ENCODE measurements at regions of chr12 and their contacts with region 1.

Region 1: GRCh38 chr12:89461649-89462612 is 62.7 kb downstream of the GALNT4 start:
- DNase-seq: no peak
- ATAC-seq: peak; percentile 94

Region 2: DNA sequence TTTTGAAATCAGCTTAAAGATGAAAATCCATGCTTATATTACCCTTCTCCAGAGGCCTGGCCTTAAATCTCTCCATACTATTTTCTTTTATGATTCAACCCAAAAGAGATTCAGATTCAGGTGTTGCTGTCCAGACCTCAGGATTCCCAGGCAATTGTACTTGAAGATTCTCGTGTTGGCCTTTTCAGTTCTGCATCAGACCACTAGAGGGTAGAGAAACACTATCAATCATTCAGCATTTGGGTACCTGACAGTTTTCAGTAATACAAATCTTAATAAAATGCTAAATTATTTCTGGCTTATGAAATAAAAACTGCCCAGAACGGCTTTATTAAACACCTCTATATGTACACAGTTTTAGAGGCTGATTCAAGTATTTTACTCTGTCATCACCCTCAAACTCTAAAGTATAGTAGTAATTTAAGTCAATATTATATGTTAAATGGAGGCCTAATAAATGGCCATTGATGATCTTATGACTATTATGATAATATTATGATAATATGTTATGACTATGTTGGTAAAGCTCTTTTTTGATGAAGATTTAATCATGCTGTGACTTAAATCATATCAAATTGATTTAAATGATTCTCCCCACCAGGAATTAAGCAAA is 410.8 kb before region 1 on chr12:
- intact Hi-C with region 1: loop called (anchors 1 kb)
- DNase-seq: no peak
- ATAC-seq: peak; percentile 72

Region 3: DNA sequence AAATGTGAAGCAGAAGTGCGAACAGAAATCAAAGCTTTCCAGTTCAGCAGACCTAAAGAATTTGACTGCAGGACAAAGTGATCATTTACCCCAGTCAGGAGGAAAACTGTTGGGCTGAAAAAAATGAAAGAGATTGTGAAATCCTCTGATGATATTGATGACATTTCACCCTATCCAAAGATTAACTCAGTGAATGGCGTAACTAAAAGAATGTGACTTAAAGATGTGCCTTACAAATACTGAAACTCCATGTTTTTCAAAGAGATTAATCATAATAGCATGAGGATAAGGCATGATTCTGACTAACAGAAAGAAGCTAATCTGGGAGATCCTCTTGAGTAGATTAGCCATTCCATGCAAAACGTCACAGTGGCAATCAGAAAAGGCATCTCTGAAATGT is 335.2 kb before region 1 on chr12:
- intact Hi-C with region 1: no loop called
- DNase-seq: no peak
- ATAC-seq: no peak

Region 4: GRCh38 chr12:89690925-89691324 is 229.0 kb after region 1 on chr12:
- intact Hi-C with region 1: no loop called
- DNase-seq: no peak
- ATAC-seq: no peak

Region 5: GRCh38 chr12:90211017-90211416 is 749.1 kb after region 1 on chr12:
- intact Hi-C with region 1: no loop called
- DNase-seq: no peak
- ATAC-seq: no peak